HCT116 (cell line): ENCODE measurements at regions of chr6 and their contacts with region 1.

Region 1: DNA sequence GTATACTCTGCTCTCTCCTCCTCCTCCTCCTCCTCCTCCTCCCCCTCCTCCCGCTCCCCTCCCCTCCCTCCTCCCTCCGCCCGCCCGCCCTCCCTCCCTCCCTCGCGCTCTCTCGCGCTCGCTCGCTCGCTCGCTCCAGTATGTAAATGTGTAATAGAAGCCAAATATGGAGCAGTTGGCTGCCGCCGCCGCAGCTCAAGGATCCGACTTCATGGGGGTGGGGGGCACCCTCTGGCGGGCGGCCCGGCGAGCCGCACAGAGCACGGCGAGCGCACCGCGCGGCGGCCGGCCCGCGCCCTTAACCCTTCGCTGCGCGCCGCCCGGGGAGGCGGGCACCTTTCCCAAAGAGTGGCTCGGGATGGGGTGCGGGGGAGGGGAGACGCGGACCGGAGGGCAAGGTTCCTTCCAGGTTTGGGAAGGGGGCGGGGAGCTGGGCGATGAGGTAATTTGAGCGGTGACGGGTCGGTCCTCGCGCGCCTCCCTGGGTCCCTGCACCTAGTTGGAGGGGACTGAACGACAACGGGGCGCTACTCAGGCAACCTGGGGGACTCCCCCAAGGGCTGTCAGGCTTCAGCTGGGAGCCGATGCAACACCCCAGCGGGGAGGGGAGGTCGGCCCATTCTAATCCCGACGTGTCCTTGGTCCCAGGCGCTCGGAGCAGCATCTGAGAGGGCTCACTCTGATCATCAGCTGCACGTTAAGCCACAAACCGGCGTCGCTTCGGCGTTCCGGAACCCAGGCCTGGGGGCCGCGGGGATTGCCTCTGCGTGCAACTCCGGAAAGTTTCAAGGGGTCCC is 409 bp upstream of the ATXN1 start:
- DNase-seq: peak; percentile 74
- ATAC-seq: peak; percentile 55
- H3K4me3 ChIP-seq: peak overlapping the region; percentile 56 to 89
- H3K27ac ChIP-seq: peak overlapping the region; percentile 81
- H3K4me1 ChIP-seq: peaks cover 38 to 62% of the 10 kb centered on the region in 2 experiments
- H3K27me3 ChIP-seq: no peaks in the 10 kb centered on the region
- CTCF ChIP-seq: 0 out of 6 replicates have a peak, but pooled peaks of 1 of the 3 experiments have one; percentile 12
- POLR2A ChIP-seq: no peak
- RAD21 ChIP-seq: no peak; the same call in 1 of the 2 replicates

Region 2: DNA sequence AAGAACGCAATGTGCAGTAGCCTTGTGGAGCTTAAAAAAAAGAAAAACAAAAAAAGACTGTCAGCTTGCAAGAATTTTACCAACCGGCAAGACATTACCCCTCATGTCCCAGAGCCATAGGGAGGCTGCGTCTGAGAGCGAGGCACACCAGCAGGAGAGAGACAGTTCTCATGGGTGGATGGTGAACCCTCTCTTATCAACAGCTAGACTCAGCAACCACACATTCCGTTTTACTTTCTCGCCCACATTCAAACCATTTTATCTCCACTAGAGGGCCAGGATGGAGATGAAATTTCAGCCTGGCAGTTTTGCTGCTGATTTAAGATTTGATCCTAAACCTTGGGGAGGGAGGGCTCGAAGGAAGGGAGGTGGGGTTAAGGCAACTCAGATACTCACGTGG is 247.4 kb before region 1 on chr6:
- CTCF ChIA-PET with region 1: interaction called, 25 read pairs
- POLR2A ChIA-PET with region 1: interaction called, 3 read pairs
- RAD21 ChIA-PET with region 1: interaction called in 1 of 2 experiments, 3 read pairs
- intact Hi-C with region 1: loop called (anchors 2 kb)
- DNase-seq: no peak
- ATAC-seq: peak; percentile 62
- H3K4me3 ChIP-seq: no peak overlapping the region
- H3K27ac ChIP-seq: no peak overlapping the region
- H3K4me1 ChIP-seq: peaks cover 30 to 40% of the 10 kb centered on the region in 2 experiments
- H3K27me3 ChIP-seq: no peaks in the 10 kb centered on the region
- CTCF ChIP-seq: peak; percentile 53 to 69 (median 59); a peak in 5 of 6 replicates
- POLR2A ChIP-seq: no peak
- RAD21 ChIP-seq: peak; percentile 55

Region 3: GRCh38 chr6:16712931-16713484 is 48.7 kb before region 1 on chr6:
- CTCF ChIA-PET with region 1: interaction called, 7 read pairs
- POLR2A ChIA-PET with region 1: interaction called, 5 read pairs
- RAD21 ChIA-PET with region 1: interaction called, 3 read pairs
- intact Hi-C with region 1: loop called (anchors 1 kb)
- DNase-seq: peak; percentile 91
- ATAC-seq: peak; percentile 68
- H3K4me3 ChIP-seq: peak overlapping the region; percentile 8 to 38; a peak in 3 of 4 replicates
- H3K27ac ChIP-seq: peak overlapping the region; percentile 89
- H3K4me1 ChIP-seq: peaks cover 33 to 40% of the 10 kb centered on the region in 2 experiments
- H3K27me3 ChIP-seq: no peaks in the 10 kb centered on the region
- CTCF ChIP-seq: peak in 2 of 3 experiments; percentile 47 to 57; a peak in 4 of 6 replicates
- POLR2A ChIP-seq: peak; percentile 35
- RAD21 ChIP-seq: peak; percentile 28

Region 4: DNA sequence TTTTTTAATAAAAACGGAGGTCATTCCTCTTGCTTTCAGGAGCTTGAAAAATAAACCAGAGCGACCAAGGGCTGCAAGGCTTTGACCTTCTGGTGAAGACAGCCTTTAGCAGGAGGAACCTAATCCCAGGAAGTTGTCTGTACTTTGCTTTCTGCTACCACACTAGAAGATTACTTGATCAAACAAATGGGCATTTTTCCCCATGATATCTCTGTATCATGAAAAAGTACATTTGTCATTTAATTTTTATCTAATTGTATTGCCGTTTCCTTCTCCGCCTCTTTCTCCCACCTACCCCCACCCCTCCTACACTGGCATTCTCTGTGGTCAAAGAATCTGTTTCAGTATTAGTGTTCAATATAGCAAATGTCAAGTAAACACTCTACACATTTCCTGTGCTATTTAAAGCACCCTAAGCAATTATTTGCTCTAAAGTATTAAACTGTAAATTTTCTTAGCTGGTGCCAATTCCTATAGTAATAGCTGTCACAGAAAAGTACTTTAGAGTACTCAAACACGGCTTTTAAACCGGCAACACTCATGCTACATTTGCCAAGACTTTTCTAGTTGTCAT is 30.1 kb before region 1 on chr6:
- CTCF ChIA-PET with region 1: interaction called, 13 read pairs
- POLR2A ChIA-PET with region 1: interaction called, 9 read pairs
- RAD21 ChIA-PET with region 1: interaction called in 1 of 2 experiments, 4 read pairs
- intact Hi-C with region 1: loop called (anchors 2 kb)
- DNase-seq: no peak
- ATAC-seq: no peak
- H3K4me3 ChIP-seq: no peak overlapping the region
- H3K27ac ChIP-seq: no peak overlapping the region
- H3K4me1 ChIP-seq: peaks cover 37 to 51% of the 10 kb centered on the region in 2 experiments
- H3K27me3 ChIP-seq: no peaks in the 10 kb centered on the region
- CTCF ChIP-seq: no peak
- POLR2A ChIP-seq: no peak
- RAD21 ChIP-seq: no peak

Region 5: GRCh38 chr6:17086469-17086868 is 324.8 kb after region 1 on chr6:
- CTCF ChIA-PET with region 1: interaction called, 13 read pairs
- POLR2A ChIA-PET with region 1: interaction called, 3 read pairs
- RAD21 ChIA-PET with region 1: interaction called in 1 of 2 experiments, 5 read pairs
- intact Hi-C with region 1: loop called (anchors 5 kb)
- DNase-seq: peak; percentile 75
- ATAC-seq: peak; percentile 97
- H3K4me3 ChIP-seq: no peak overlapping the region
- H3K27ac ChIP-seq: no peak overlapping the region
- H3K4me1 ChIP-seq: peaks cover 0 to 4% of the 10 kb centered on the region in 2 experiments; a peak in 1 of 4 replicates
- H3K27me3 ChIP-seq: no peaks in the 10 kb centered on the region
- CTCF ChIP-seq: peak; percentile 63 to 77 (median 72); a peak in 5 of 6 replicates
- POLR2A ChIP-seq: no peak
- RAD21 ChIP-seq: peak; percentile 83

Region 6: DNA sequence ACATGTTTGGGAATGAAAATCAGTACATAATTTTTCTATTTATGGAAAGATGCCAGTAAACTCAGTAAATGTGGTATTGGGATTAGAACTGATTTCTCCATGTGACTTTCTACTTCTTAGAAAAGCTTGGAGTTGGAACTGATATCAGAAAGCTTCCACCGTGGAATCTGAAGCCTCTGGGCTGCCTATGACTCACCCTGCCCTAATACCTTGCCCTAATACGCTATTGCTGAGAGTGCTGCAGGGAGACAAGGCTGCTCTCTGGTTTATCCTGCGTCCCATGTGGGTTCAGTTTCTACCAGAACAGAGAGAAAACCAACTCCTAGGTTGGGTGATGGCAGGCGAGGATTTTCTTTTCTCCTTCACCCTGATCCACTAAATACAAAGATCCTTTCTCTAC is 336.9 kb after region 1 on chr6:
- CTCF ChIA-PET with region 1: no interaction called
- POLR2A ChIA-PET with region 1: no interaction called
- RAD21 ChIA-PET with region 1: no interaction called
- intact Hi-C with region 1: no loop called
- DNase-seq: no peak
- ATAC-seq: no peak
- H3K4me3 ChIP-seq: no peak overlapping the region
- H3K27ac ChIP-seq: no peak overlapping the region
- H3K4me1 ChIP-seq: peaks cover 0 to 1% of the 10 kb centered on the region in 2 experiments; a peak in 1 of 4 replicates
- H3K27me3 ChIP-seq: no peaks in the 10 kb centered on the region
- CTCF ChIP-seq: no peak
- POLR2A ChIP-seq: no peak
- RAD21 ChIP-seq: no peak